WTC11 (cell line): ENCODE measurements at regions of chr11 and their contacts with region 1.

Region 1: DNA sequence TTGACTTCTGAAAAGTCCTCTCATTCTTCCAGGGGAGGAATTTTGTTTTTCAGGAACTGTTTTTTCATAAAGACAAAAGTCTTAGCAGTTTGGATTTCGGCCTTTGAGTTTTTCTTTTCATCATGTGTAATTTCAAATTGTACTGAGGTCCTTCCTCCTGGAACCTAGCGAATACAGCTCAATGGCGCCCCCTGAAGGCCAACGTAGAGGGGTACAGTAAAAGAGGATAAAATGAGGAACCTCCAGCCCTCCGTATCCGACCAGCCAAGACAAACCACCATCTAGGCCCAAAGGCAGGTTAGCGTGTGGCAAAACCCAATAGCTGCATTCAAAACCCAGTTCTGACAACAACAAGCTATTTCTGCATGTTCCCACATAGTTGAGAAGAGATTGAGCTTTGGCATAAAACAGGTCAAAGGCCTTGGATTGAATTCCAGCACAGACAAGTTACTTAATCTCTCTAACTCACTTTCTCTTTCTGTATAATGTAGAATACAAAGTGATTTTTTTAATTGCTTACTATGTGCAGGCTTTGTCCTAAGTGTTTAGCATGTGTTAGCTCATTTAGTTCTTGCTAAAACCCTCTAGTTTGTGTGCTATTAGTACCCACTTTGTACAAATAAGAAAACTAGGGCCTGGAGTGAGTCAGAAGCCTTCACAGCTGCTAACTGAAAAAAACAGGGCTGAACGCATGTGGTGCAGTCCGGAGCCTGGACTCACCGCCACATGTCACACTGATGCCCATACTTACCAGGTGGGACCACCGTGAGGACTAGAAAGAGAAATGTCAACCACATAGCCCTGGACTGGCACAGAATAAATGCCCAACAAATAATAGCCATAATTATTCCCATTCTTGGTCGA is 43.2 kb upstream of the ETS1 start:
- DNase-seq: peak; percentile 86
- ATAC-seq: peak; percentile 75
- H3K4me3 Mint-ChIP-seq: no peak overlapping the region
- H3K27ac Mint-ChIP-seq: no peak overlapping the region
- H3K4me1 Mint-ChIP-seq: peaks cover 28% of the 10 kb centered on the region
- H3K27me3 Mint-ChIP-seq: no peaks in the 10 kb centered on the region; the same call in 1 of the 2 replicates
- CTCF ChIP-seq: peak; percentile 90

Region 2: DNA sequence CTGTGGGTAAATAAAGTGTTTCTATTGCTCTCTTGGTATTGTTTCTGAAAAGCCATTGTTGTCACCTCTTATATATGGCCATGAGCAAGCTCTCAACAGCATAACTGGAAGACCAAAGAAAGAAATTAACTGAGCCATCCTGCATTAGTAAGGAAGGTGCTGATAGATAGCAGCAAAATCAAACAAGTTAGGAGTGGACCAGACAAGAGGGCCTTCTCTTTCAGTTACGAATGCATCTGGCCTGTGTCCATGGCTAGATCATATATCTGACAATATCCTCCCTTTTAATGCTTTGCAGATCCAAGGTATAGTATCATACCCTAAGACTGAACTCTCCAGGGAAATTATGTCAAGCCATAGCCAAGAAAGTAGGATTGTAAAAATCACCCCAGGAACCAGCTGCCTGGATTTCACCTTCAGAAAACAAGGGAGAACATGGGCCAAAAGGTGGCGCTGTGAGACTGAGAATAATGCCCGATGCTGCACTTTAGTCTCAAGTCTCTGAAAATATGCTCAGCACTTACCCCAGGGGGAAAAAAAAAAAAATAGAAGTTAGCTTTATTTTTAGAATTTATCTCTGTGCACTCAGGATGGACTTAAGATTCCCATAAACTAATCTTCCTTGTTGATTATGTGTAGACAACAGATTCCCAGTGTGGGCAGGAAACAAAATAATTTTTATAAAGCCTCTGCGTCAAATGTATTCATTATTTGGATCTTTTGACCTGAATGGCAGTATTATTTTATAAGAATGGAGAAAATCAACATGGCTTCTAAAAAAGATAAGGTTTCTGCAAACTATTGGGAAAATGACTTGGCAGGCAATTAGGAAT is 458.3 kb before region 1 on chr11:
- CTCF ChIA-PET with region 1: interaction called, 38 read pairs
- POLR2A ChIA-PET with region 1: no interaction called
- DNase-seq: peak; percentile 84
- ATAC-seq: peak; percentile 73
- H3K4me3 Mint-ChIP-seq: no peak overlapping the region
- H3K27ac Mint-ChIP-seq: no peak overlapping the region
- H3K4me1 Mint-ChIP-seq: peaks cover 15% of the 10 kb centered on the region
- H3K27me3 Mint-ChIP-seq: no peaks in the 10 kb centered on the region
- CTCF ChIP-seq: peak; percentile 77

Region 3: GRCh38 chr11:128290106-128290840 is 340.3 kb before region 1 on chr11:
- CTCF ChIA-PET with region 1: interaction called, 49 read pairs
- POLR2A ChIA-PET with region 1: no interaction called
- DNase-seq: peak; percentile 52
- ATAC-seq: peak; percentile 86
- H3K4me3 Mint-ChIP-seq: no peak overlapping the region
- H3K27ac Mint-ChIP-seq: no peak overlapping the region
- H3K4me1 Mint-ChIP-seq: peaks cover 10% of the 10 kb centered on the region
- H3K27me3 Mint-ChIP-seq: no peaks in the 10 kb centered on the region
- CTCF ChIP-seq: peak; percentile 78

Region 4: GRCh38 chr11:128552783-128553661 is 77.6 kb before region 1 on chr11:
- CTCF ChIA-PET with region 1: interaction called, 19 read pairs
- POLR2A ChIA-PET with region 1: no interaction called
- DNase-seq: no peak
- ATAC-seq: no peak
- H3K4me3 Mint-ChIP-seq: no peak overlapping the region
- H3K27ac Mint-ChIP-seq: no peak overlapping the region
- H3K4me1 Mint-ChIP-seq: peaks cover 40% of the 10 kb centered on the region
- H3K27me3 Mint-ChIP-seq: peaks cover 62% of the 10 kb centered on the region
- CTCF ChIP-seq: no peak

Region 5: DNA sequence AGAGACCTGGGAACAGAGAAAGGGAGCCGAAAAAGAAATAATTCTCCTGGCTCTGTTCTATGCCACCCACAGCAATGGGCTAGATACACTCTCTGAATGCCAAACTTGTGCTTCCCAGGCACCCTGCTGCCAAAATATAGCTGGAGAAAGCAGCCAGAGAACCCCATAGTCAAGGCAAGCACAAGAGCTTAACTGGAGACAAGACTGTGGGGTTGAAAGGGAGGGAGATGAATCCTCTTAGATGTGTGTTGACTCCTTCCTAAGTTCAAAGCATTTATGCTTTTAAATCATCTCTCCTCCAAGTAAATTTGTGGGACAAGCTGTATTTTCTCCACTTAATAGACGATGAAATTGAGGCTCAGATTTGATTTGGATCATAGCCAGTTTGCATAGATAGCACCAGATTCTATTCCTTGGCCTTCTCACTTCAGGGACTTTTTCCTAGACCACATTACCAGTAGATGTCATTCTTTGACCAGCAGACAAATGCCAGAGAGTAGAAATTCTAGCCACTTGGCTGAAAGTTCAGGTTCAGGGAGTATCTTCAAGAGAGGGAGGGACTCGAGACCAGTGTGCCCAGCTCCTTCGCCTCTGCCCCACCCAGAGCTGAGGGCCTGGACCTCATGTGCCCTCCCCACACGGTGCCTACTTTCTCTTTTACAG is 26.7 kb before region 1 on chr11:
- CTCF ChIA-PET with region 1: interaction called, 22 read pairs
- POLR2A ChIA-PET with region 1: no interaction called
- DNase-seq: no peak
- ATAC-seq: no peak; the same call in 1 of the 2 replicates
- H3K4me3 Mint-ChIP-seq: no peak overlapping the region
- H3K27ac Mint-ChIP-seq: no peak overlapping the region
- H3K4me1 Mint-ChIP-seq: peaks cover 35% of the 10 kb centered on the region
- H3K27me3 Mint-ChIP-seq: peaks cover 9% of the 10 kb centered on the region
- CTCF ChIP-seq: no peak

Region 6: GRCh38 chr11:128831174-128832120 is 200.8 kb after region 1 on chr11:
- CTCF ChIA-PET with region 1: interaction called, 52 read pairs
- POLR2A ChIA-PET with region 1: no interaction called
- DNase-seq: peak; percentile 89
- ATAC-seq: peak; percentile 89
- H3K4me3 Mint-ChIP-seq: no peak overlapping the region
- H3K27ac Mint-ChIP-seq: no peak overlapping the region
- H3K4me1 Mint-ChIP-seq: peaks cover 25% of the 10 kb centered on the region
- H3K27me3 Mint-ChIP-seq: no peaks in the 10 kb centered on the region
- CTCF ChIP-seq: peak; percentile 94